ENCODE measurements at regions of chr18 and their contacts with region 1.

Region 1: GRCh38 chr18:61635901-61636528 is 256.8 kb downstream of the RNF152 start:
- DNase-seq: peak; percentile 4
- H3K4me3 ChIP-seq: no peak overlapping the region
- H3K27me3 ChIP-seq: no peaks in the 10 kb centered on the region
- CTCF ChIP-seq: peak; percentile 89

Region 2: DNA sequence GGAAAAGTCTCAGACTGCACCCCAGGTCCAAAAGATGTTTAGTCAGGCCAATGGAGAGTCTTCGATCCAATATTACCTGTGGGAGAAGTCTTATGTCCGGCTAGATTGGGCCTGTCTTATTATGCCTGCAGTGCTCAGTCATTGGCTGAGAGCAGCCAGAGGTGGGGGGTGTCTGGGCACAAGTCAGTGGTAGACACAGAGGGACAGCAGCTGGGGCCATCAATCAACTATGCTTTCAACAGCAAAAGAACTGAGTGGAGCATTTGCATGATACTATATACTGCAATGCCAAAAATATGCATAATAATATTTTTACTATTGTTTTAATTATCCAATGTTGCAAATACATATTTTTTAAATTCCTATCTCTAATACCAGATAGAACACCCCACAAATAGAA is 601.4 kb before region 1 on chr18:
- CTCF ChIA-PET with region 1: no interaction called
- POLR2A ChIA-PET with region 1: no interaction called
- DNase-seq: no peak
- H3K4me3 ChIP-seq: no peak overlapping the region
- H3K27me3 ChIP-seq: no peaks in the 10 kb centered on the region
- CTCF ChIP-seq: no peak

Region 3: GRCh38 chr18:61893971-61894750 is 258.1 kb after region 1 on chr18:
- CTCF ChIA-PET with region 1: interaction called, 21 read pairs
- POLR2A ChIA-PET with region 1: interaction called, 5 read pairs
- DNase-seq: no peak
- H3K4me3 ChIP-seq: peak overlapping the region; percentile 89
- H3K27me3 ChIP-seq: no peaks in the 10 kb centered on the region
- CTCF ChIP-seq: 0 out of 2 replicates have a peak, but pooled peaks have one; percentile 25

Region 4: DNA sequence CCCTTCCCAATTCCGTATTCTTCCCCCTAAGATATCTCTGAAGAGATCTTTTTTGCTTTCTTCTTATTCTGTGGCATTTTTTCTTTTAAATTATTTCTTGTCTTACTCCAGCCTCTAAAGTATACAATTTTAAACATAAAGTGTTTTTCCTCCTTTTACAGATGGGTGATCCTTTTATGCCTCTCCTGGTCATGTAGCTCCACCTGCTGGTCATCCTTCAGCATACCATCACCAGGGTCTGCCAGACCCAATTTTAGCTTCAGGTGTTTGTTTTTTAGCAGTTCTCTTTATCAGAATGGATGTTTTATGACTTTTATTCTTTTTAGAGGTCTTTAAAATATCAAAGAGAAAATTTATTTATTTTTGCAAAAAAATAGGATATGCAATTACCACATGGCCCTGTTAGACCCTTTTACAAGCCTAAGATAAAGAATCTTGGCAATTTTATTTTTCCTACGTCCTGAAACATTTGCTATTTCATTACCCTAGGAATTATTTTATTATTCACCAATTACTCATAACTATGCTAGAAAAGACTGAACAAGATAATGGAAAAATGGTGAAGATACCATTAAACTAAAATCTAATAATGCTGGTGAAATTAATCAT is 495.4 kb after region 1 on chr18:
- CTCF ChIA-PET with region 1: interaction called, 25 read pairs
- POLR2A ChIA-PET with region 1: no interaction called
- DNase-seq: peak; percentile 4
- H3K4me3 ChIP-seq: no peak overlapping the region
- H3K27me3 ChIP-seq: no peaks in the 10 kb centered on the region
- CTCF ChIP-seq: peak; percentile 90

Measured in BJ (cell line).